Cardiac septum (tissue), 1 donor: ENCODE measurements at regions of chr10 and their contacts with region 1.

Region 1: GRCh38 chr10:123154092-123154921 is at the start of gene BUB3:
- DNase-seq: peak; percentile 99
- total RNA-seq, gene BUB3: 30.6 TPM

Region 2: GRCh38 chr10:124418726-124419501 is 1264.6 kb after region 1 on chr10 and contains the start of gene OAT:
- intact Hi-C with region 1: loop called (anchors 10 kb)
- DNase-seq: peak; percentile 98
- total RNA-seq, gene OAT: 38.0 TPM